GM18951 (cell line): ENCODE measurements at regions of chr1 and their contacts with region 1.

Region 1: DNA sequence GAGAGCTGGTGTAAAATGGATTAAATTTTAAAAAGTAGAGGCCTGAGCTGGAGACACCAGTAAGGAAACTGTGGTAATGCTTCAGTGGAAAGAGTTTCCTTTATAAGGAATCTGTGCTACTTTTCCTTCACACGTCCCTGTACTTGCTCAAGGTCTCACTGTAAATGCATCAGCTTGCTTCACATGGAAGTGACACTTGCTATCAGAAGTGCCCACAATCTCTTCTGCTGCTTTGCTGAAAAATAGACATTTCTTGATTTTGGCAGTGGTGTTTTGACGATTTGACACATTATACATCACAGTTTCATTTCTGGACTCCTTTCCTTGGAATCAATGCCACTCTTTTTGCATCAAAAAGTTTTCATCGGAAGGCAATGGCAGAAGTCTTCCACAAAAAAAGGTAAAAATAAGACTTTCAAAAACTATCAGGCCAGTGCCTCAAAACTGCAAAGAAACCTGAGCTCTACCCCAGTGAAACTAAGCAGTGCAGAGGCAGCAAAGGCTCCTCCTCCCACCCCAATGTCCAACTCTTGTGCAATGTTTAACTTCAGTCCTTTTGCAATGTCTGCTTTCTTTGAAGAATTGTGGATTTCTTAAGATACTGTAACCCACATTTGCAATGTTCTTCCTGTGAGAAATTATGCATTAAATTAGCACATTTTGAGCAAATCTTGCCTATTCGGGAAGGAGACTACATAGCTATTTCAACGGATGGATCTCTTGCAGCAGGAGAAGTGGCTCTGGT is 18.4 kb upstream of the TSPAN2 start:
- POLR2A ChIP-seq: no peak

Region 2: GRCh38 chr1:114979278-114979891 is 128.3 kb before region 1 on chr1:
- in situ Hi-C with region 1: loop called (anchors 5 kb)
- POLR2A ChIP-seq: no peak

Region 3: GRCh38 chr1:115373305-115373704 is 265.6 kb after region 1 on chr1:
- in situ Hi-C with region 1: no loop called
- POLR2A ChIP-seq: no peak